ENCODE measurements at regions of chr11 and their contacts with region 1.

Region 1: DNA sequence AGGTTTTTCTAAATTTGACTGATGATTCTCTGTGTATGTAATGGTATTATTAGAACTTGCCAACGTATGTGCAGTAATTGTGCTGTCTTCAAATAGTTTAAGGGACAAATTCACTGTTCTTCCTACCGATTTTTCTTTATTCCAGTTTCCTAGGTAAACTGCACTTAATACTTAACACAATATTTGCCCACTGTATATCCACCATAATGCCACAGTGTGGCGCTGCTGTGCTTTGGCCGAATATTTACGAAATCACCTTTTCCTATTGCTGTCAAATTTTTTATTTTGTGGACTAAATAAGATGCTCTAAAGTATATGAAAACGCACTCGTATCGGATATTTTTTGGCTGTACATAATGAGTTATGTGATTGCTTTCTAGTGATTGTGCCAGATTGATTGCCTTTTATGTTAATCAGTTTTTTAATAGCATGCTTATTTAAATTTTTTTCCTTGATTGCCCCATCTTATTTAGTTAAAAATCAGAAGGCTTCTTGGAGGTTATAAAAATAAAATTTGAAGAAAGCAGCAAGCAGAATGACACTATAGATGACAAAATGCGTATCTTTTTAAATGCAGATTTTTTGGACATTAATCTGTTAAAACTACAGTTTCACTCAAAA is 10.5 kb downstream of the AASDHPPT start:
- DNase-seq: peak; percentile 83
- ATAC-seq: peak; percentile 63
- H3K4me3 ChIP-seq: no peak overlapping the region
- H3K27ac ChIP-seq: no peak overlapping the region
- H3K4me1 ChIP-seq: peaks cover 24% of the 10 kb centered on the region
- H3K27me3 ChIP-seq: no peaks in the 10 kb centered on the region
- CTCF ChIP-seq: peak; percentile 99

Region 2: GRCh38 chr11:106127604-106128003 is 39.7 kb after region 1 on chr11:
- CTCF ChIA-PET with region 1: no interaction called
- POLR2A ChIA-PET with region 1: no interaction called
- intact Hi-C with region 1: no loop called
- DNase-seq: peak; percentile 21
- ATAC-seq: peak; percentile 35; the same call in 1 of the 2 replicates
- H3K4me3 ChIP-seq: no peak overlapping the region
- H3K27ac ChIP-seq: no peak overlapping the region
- H3K4me1 ChIP-seq: no peaks in the 10 kb centered on the region
- H3K27me3 ChIP-seq: no peaks in the 10 kb centered on the region
- CTCF ChIP-seq: no peak

Region 3: GRCh38 chr11:106156290-106156937 is 68.5 kb after region 1 on chr11:
- CTCF ChIA-PET with region 1: interaction called, 3 read pairs
- POLR2A ChIA-PET with region 1: no interaction called
- intact Hi-C with region 1: loop called (anchors 2 kb)
- DNase-seq: peak; percentile 76
- ATAC-seq: peak; percentile 59
- H3K4me3 ChIP-seq: no peak overlapping the region
- H3K27ac ChIP-seq: no peak overlapping the region
- H3K4me1 ChIP-seq: no peaks in the 10 kb centered on the region
- H3K27me3 ChIP-seq: no peaks in the 10 kb centered on the region
- CTCF ChIP-seq: peak; percentile 85

Region 4: DNA sequence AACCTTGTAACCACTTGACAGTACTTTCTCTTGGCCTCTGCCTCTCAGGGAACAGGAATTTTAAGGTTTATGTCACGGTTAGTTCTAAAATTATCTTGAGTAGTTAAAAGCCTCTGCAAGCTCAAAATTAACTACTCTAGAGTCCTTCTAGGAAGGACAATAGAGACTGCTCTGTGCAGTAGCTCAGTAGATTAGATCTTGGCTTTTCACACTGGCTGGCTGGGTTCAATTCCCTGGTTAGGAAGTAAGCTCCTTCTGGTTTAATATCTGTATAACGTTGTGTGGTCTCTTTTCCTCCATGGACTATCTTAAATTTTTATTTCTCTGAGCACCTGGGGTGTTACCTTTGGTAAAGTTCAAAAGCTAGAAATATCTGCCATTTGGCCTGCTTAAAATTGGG is 98.7 kb after region 1 on chr11:
- CTCF ChIA-PET with region 1: no interaction called
- POLR2A ChIA-PET with region 1: no interaction called
- intact Hi-C with region 1: no loop called
- DNase-seq: no peak
- ATAC-seq: no peak
- H3K4me3 ChIP-seq: no peak overlapping the region
- H3K27ac ChIP-seq: no peak overlapping the region
- H3K4me1 ChIP-seq: peaks cover 2% of the 10 kb centered on the region; the same call in 1 of the 2 replicates
- H3K27me3 ChIP-seq: no peaks in the 10 kb centered on the region
- CTCF ChIP-seq: no peak

Region 5: GRCh38 chr11:106306942-106307341 is 219.0 kb after region 1 on chr11:
- CTCF ChIA-PET with region 1: no interaction called
- POLR2A ChIA-PET with region 1: no interaction called
- intact Hi-C with region 1: loop called (anchors 10 kb)
- DNase-seq: peak; percentile 44
- ATAC-seq: peak; percentile 82
- H3K4me3 ChIP-seq: no peak overlapping the region
- H3K27ac ChIP-seq: no peak overlapping the region
- H3K4me1 ChIP-seq: peaks cover 10% of the 10 kb centered on the region
- H3K27me3 ChIP-seq: no peaks in the 10 kb centered on the region
- CTCF ChIP-seq: peak; percentile 62

Region 6: DNA sequence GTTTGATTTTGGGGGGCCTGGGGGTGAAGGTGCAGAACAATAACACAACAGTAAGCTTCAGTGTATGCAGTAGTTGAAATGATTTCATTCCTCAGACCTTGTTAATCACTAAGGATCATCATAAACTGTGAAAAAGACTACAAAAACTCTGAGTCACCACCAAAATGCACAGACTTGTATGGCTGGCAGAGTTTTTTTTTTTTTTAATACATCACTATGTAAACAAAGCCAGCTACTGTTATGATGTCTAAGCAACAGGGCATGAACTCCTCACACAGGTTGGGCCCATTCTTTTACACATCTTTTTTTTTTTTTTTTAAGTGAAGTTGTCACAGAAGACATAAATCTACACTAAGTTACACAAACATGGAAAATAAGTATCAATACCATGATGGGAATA is 618.4 kb after region 1 on chr11:
- CTCF ChIA-PET with region 1: no interaction called
- POLR2A ChIA-PET with region 1: no interaction called
- intact Hi-C with region 1: loop called (anchors 5 kb)
- DNase-seq: peak; percentile 95
- ATAC-seq: peak; percentile 99
- H3K4me3 ChIP-seq: no peak overlapping the region
- H3K27ac ChIP-seq: peak overlapping the region; percentile 60
- H3K4me1 ChIP-seq: peaks cover 21% of the 10 kb centered on the region
- H3K27me3 ChIP-seq: no peaks in the 10 kb centered on the region
- CTCF ChIP-seq: no peak

Measured in PC-3 (cell line).